ENCODE measurements at regions of chr17 and their contacts with region 1.

Region 1: DNA sequence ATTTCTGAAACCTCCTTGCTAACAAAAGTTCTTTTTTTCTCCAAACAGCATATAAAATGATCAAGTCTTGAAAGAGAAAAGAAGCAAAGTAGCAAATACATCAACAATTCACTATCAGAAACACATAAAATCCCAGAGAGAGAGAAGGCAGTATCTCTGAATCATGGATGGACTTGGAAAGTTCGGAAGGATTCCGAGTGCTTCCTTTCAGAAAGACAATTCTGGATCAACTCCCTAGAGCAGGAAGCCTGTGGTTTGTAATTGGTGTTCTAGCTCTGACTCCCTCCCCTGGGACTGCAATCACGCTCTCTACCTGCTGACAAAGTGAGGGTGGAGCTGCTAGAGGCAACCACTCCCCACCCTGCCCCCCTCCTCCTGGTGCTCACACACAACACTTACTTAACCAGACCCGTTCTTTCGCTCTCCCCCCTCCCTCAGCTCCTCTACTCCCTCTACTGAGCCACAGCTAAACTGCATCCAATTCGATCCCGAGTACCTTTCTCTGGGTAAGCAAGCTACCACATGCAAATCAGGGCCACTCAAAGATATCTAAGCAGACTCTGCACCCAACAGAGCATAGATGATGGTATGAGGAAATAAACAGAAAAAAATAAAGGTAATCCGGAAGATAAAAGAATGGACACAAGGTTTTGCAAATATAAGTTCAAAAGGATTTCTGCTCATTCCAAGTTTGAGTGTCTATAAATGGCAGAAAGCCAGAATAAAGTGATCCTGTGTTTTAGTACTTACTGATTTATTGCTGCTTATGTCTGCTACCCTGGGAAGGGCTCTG is at the start of gene RNF43:
- DNase-seq: peak; percentile 100
- ATAC-seq: peak; percentile 93
- H3K4me3 ChIP-seq: peak within 1 kb of the TSS; percentile 66 to 68
- H3K27ac ChIP-seq: peak within 1 kb of the TSS; percentile 78
- H3K4me1 ChIP-seq: peaks cover 56 to 69% of the 10 kb centered on the region in 2 experiments
- H3K27me3 ChIP-seq: no peaks in the 10 kb centered on the region
- CTCF ChIP-seq: peak; percentile 70 to 92 (median 89); a peak in 5 of 6 replicates
- POLR2A ChIP-seq: no peak
- RAD21 ChIP-seq: peak; percentile 92
- total RNA-seq, gene RNF43: 42.2 TPM

Region 2: GRCh38 chr17:58344047-58344790 is 73.3 kb before region 1 on chr17:
- CTCF ChIA-PET with region 1: interaction called, 3 read pairs
- POLR2A ChIA-PET with region 1: interaction called, 10 read pairs
- RAD21 ChIA-PET with region 1: interaction called in 1 of 2 experiments, 3 read pairs
- intact Hi-C with region 1: no loop called
- DNase-seq: no peak
- ATAC-seq: peak; percentile 16; the same call in 1 of the 2 replicates
- H3K4me3 ChIP-seq: no peak overlapping the region
- H3K27ac ChIP-seq: no peak overlapping the region
- H3K4me1 ChIP-seq: peaks cover 0 to 4% of the 10 kb centered on the region in 2 experiments; a peak in 2 of 4 replicates
- H3K27me3 ChIP-seq: no peaks in the 10 kb centered on the region
- CTCF ChIP-seq: no peak
- POLR2A ChIP-seq: no peak
- RAD21 ChIP-seq: no peak

Region 3: GRCh38 chr17:58377093-58377601 is 40.3 kb before region 1 on chr17:
- CTCF ChIA-PET with region 1: interaction called, 6 read pairs
- POLR2A ChIA-PET with region 1: interaction called, 17 read pairs
- RAD21 ChIA-PET with region 1: no interaction called
- intact Hi-C with region 1: no loop called
- DNase-seq: peak; percentile 49
- ATAC-seq: peak; percentile 56
- H3K4me3 ChIP-seq: peak overlapping the region in 1 of 2 experiments; percentile 10; a peak in 1 of 4 replicates
- H3K27ac ChIP-seq: peak overlapping the region; percentile 23; the same call in 1 of the 2 replicates
- H3K4me1 ChIP-seq: peaks cover 62 to 63% of the 10 kb centered on the region in 2 experiments
- H3K27me3 ChIP-seq: no peaks in the 10 kb centered on the region
- CTCF ChIP-seq: no peak
- POLR2A ChIP-seq: no peak
- RAD21 ChIP-seq: 0 out of 2 replicates have a peak, but pooled peaks have one; percentile 10

Region 4: GRCh38 chr17:58391302-58391984 is 26.1 kb before region 1 on chr17:
- CTCF ChIA-PET with region 1: interaction called, 12 read pairs
- POLR2A ChIA-PET with region 1: interaction called, 26 read pairs
- RAD21 ChIA-PET with region 1: interaction called, 3 to 8 read pairs
- intact Hi-C with region 1: no loop called
- DNase-seq: peak; percentile 100
- ATAC-seq: peak; percentile 79
- H3K4me3 ChIP-seq: peak overlapping the region; percentile 3 to 27; a peak in 2 of 4 replicates
- H3K27ac ChIP-seq: peak overlapping the region; percentile 64
- H3K4me1 ChIP-seq: peaks cover 92 to 100% of the 10 kb centered on the region in 2 experiments
- H3K27me3 ChIP-seq: no peaks in the 10 kb centered on the region
- CTCF ChIP-seq: no peak
- POLR2A ChIP-seq: no peak
- RAD21 ChIP-seq: peak; percentile 56

Region 5: DNA sequence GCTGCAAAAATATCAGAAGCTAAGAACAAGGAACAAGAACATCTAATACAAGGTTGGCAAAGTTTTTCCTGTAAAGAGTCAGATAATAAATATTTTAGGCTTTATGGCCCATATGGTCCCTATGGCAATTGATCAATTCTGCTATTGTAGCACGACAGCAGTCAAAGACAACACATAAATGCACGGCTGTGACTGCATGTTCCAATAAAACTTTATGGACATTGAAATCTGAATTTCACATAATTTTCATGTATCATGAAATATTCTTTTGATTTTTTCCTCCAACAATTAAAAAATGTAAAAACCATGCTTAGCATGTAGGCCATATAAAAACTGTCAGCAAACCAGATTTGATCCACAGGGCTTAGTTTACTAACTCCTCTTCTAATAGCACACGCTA is 10.3 kb after region 1 on chr17:
- CTCF ChIA-PET with region 1: interaction called, 29 read pairs
- POLR2A ChIA-PET with region 1: interaction called, 54 read pairs
- RAD21 ChIA-PET with region 1: interaction called in 1 of 2 experiments, 3 read pairs
- intact Hi-C with region 1: no loop called
- DNase-seq: no peak
- ATAC-seq: peak; percentile 39
- H3K4me3 ChIP-seq: peak overlapping the region in 1 of 2 experiments; percentile 42; a peak in 2 of 4 replicates
- H3K27ac ChIP-seq: peak overlapping the region; percentile 46; the same call in 1 of the 2 replicates
- H3K4me1 ChIP-seq: peaks cover 15 to 19% of the 10 kb centered on the region in 2 experiments
- H3K27me3 ChIP-seq: no peaks in the 10 kb centered on the region
- CTCF ChIP-seq: no peak; a peak in 1 of 6 replicates
- POLR2A ChIP-seq: no peak
- RAD21 ChIP-seq: no peak

Measured in HCT116 (cell line).